Activated T-helper 2 cell treated with anti-CD3 and anti-CD28 coated beads, Interferon-gamma antibody, Interleukin-2, Interleukin-4, amounts not matched to agents 10 μg/mL and 5 μg/mL and 100 μg/mL, durations not matched to agents 14 hours and 24 hours and 36 hours (primary cell): ENCODE measurements at regions of chr6 and their contacts with region 1.

Region 1: DNA sequence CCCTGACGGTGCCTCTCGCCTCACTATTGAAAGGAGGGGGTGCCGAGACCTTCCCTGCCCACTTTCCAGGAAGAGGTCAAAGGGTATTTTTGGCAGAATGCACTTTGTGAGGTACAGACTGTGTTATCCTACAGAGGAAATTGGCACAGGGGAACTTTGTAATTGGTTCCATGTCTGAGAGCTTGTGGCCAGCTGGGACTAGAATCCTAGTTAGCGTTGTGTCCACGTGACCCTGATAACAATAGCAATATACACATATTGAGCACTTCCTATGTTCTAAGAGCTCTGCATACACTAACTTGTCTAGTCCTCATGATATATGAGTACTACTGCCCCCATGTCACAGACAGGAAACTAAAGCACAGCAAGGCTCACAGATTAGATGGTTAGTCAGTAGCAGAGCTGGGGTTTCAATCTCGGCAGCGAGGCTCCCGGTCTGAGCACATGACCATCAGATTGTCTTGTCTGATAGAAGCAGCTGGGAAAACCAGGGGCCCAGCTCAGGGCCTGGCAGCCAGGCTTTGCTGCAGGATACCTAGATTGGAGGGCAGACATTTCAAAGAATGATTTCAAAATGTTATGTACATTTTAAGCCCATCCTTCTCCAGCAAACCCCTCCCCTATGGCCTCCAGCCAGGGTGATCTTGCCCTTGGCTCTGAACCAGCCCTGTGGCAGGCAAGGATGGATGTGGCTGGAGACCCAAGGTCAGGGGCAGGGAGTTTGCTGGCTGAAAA is 1.4 kb downstream of the MAPK13 start:
- DNase-seq: peak; percentile 45
- H3K4me3 Mint-ChIP-seq: peak overlapping the region; percentile 75
- H3K27ac Mint-ChIP-seq: peak overlapping the region; percentile 92
- H3K4me1 Mint-ChIP-seq: peaks cover 29% of the 10 kb centered on the region
- H3K27me3 Mint-ChIP-seq: no peaks in the 10 kb centered on the region

Region 2: DNA sequence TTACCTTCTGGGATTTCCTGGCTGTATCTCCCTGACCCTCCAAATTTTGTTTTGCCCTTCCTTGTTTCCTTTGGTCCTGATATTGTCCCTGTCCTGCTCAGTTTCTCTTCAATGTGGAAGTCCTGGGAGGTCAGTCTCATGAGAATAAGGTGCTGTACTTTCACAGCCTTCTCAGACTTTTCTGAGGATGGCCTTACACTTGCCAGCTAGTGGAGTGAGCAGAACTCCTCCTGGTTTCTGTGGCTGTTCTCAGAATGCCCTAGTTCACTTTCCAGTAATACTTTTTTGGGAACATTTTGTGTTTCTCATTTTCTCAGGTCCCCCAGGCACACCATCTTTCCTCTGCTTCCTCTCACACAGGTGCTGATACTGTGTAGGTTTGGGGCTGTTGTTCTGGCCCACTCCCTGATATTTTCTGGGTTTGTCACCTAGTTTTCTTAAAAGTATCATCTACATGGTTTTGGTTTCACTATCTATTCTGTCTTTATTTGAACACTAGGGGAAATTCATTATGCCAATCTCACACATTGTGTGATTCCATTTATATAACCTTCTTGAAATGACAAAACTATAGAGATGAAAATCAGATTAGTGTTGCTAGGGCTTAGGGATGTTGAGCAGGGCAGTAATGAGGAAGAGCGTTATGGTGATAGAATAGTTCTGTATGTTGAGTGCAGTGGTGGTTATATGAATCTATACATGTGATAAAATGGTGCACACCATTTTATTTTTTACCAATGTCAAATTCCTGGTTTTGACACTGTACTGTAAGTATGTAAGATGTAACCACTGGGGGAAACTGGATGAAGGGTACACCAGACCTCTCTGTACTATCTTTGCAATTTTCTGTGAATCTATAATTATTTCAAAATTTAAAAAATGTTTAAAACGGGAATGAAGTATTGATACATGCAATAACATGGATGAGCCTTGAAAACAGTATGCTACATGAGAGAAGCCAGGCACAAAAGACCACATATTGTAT is 37.6 kb after region 1 on chr6:
- intact Hi-C with region 1: loop called (anchors 5 kb)
- DNase-seq: no peak
- H3K4me3 Mint-ChIP-seq: no peak overlapping the region
- H3K27ac Mint-ChIP-seq: peak overlapping the region; percentile 78
- H3K4me1 Mint-ChIP-seq: peaks cover 33% of the 10 kb centered on the region
- H3K27me3 Mint-ChIP-seq: no peaks in the 10 kb centered on the region

Region 3: DNA sequence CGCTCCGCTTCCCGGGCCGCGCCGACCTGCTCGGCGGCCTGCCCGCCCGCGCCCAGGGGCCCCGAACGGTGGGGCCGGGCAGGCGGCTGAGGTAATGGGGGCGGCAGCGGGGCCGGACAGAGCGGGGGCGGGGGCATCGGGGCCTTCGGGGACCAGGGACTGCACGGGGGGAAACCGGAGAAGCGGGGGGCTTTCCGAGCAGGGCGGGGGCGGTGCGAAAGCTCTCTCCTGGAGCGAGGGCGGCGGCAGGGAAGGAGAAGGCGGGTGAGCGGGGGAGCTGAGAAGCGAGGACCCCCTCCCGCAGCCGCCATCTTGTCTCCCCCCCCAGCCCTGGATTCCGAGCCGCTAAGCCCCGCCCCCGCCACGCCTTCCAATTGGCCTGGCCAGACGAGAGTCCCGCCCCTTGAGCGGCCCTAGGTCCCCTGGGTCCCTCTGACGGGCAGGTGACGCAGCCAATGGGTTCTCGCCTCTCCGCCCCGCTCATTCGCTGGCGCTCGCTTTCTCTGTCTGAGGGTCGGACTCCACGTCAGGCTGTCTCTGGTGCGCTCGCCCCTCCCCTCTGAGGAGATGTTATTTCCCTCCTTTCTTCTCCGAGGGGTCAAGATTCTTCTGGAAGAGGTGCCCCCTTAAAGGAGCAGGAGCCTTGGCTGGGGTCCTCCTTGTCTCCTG is 65.3 kb after region 1 on chr6:
- intact Hi-C with region 1: loop called (anchors 1 kb)
- DNase-seq: peak; percentile 99
- H3K4me3 Mint-ChIP-seq: peak overlapping the region; percentile 85
- H3K27ac Mint-ChIP-seq: peak overlapping the region; percentile 88
- H3K4me1 Mint-ChIP-seq: peaks cover 24% of the 10 kb centered on the region
- H3K27me3 Mint-ChIP-seq: peaks cover under 1% of the 10 kb centered on the region